HepG2 (cell line): ENCODE measurements at regions of chr2 and their contacts with region 1.

Region 1: GRCh38 chr2:70828914-70829824 is 6.4 kb downstream of the CD207 start:
- DNase-seq: no peak
- ATAC-seq: peak; percentile 35; the same call in 2 of the 3 replicates
- H3K4me3 ChIP-seq: no peak overlapping the region
- H3K27ac ChIP-seq: no peak overlapping the region
- H3K4me1 ChIP-seq: peaks cover 31% of the 10 kb centered on the region
- H3K27me3 ChIP-seq: peaks cover 5 to 36% of the 10 kb centered on the region in 2 experiments; a peak in 4 of 5 replicates
- CTCF ChIP-seq: no peak
- EP300 ChIP-seq: no peak
- POLR2A ChIP-seq: no peak
- RAD21 ChIP-seq: no peak

Region 2: GRCh38 chr2:70806013-70806412 is 23.2 kb before region 1 on chr2:
- CTCF ChIA-PET with region 1: no interaction called
- POLR2A ChIA-PET with region 1: interaction called, 3 read pairs
- in situ Hi-C with region 1: no loop called
- intact Hi-C with region 1: loop called (anchors 2 kb)
- DNase-seq: no peak
- ATAC-seq: no peak
- H3K4me3 ChIP-seq: no peak overlapping the region
- H3K27ac ChIP-seq: no peak overlapping the region
- H3K4me1 ChIP-seq: peaks cover 64% of the 10 kb centered on the region
- H3K27me3 ChIP-seq: no peaks in the 10 kb centered on the region
- CTCF ChIP-seq: no peak
- EP300 ChIP-seq: no peak
- POLR2A ChIP-seq: no peak
- RAD21 ChIP-seq: no peak

Region 3: DNA sequence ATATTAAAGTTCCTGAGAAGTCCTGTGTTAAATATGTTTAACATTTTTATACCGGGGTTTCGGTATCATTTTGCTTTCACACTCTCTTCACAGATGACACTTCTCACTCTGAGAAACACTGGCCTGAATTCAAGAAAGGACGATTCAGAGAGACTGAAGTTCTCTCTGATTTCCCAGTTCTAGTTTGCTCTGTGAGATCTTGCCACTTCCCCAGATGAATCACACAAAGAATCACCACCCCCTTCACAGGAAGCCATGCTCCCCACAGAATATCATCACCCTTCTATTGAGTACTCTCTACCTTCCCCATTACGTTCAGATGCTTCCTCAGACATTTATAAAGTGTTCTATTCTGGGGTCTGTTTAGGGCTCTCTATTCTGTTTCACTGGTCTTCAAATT is 22.5 kb after region 1 on chr2:
- CTCF ChIA-PET with region 1: no interaction called
- POLR2A ChIA-PET with region 1: no interaction called
- in situ Hi-C with region 1: no loop called
- intact Hi-C with region 1: loop called (anchors 2 kb)
- DNase-seq: no peak
- ATAC-seq: no peak
- H3K4me3 ChIP-seq: no peak overlapping the region
- H3K27ac ChIP-seq: no peak overlapping the region
- H3K4me1 ChIP-seq: no peaks in the 10 kb centered on the region
- H3K27me3 ChIP-seq: peaks cover 0 to 8% of the 10 kb centered on the region in 2 experiments; a peak in 2 of 5 replicates
- CTCF ChIP-seq: no peak
- EP300 ChIP-seq: no peak
- POLR2A ChIP-seq: no peak
- RAD21 ChIP-seq: no peak